Transverse colon (tissue), 4 donors: ENCODE measurements at regions of chr9 and their contacts with region 1.

Region 1: GRCh38 chr9:91164724-91165520 is 196.8 kb downstream of the AUH start:
- DNase-seq: peak; percentile 87
- H3K4me3 ChIP-seq: no peak overlapping the region
- H3K27ac ChIP-seq: peak overlapping the region; percentile 61 to 71 (median 66)
- H3K4me1 ChIP-seq: peaks cover 7 to 55% (median 22%) of the 10 kb centered on the region in 4 donors
- H3K27me3 ChIP-seq: no peaks in the 10 kb centered on the region
- CTCF ChIP-seq: no peak
- EP300 ChIP-seq: no peak
- POLR2A ChIP-seq: no peak

Region 2: DNA sequence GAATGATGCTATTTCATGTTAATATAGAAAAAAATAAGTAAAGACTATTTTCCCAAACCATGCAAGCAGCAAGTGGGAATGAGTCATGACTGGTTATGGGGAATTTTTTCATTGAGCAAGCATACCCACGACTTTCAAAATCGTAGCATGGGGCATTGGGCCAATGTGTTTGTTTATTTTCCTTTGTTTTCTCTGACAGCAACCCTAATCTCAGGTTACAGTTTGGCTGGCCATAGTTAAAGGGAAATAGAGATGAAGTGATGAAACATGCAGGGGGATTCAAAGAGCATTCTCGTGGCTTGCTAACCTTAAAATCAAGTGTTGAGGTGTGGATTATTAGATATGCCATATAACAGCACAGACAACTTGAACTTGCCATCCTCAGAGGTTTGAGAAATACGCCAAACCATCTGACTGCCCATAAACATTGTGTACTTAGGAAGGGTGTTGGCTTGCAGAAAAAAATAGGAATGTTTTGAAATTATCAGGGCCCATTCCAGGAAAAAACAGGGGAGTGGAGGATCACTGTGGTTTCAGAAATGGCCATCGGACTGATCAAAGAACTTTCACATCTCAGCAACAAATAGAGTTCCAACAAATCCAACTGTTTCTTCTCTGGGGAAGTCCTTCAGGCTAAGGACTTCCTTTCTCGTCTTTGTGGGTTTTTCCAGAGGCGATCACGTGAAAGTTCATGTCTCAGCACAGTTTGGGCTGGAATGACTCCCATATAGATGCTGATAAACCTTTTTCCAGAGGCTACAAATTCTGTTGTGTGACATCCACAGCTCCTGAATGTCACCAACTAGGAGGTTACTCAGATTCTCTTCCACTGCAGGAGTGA is 104.2 kb before region 1 on chr9:
- in situ Hi-C with region 1: loop called in 1 of 4 experiments (anchors 25 kb)
- intact Hi-C with region 1: no loop called
- DNase-seq: peak; percentile 28
- H3K4me3 ChIP-seq: no peak overlapping the region
- H3K27ac ChIP-seq: peak overlapping the region; percentile 9 to 61 (median 40)
- H3K4me1 ChIP-seq: peaks cover 0 to 14% (median 11%) of the 10 kb centered on the region in 4 donors
- H3K27me3 ChIP-seq: no peaks in the 10 kb centered on the region
- CTCF ChIP-seq: no peak
- EP300 ChIP-seq: no peak
- POLR2A ChIP-seq: no peak

Region 3: DNA sequence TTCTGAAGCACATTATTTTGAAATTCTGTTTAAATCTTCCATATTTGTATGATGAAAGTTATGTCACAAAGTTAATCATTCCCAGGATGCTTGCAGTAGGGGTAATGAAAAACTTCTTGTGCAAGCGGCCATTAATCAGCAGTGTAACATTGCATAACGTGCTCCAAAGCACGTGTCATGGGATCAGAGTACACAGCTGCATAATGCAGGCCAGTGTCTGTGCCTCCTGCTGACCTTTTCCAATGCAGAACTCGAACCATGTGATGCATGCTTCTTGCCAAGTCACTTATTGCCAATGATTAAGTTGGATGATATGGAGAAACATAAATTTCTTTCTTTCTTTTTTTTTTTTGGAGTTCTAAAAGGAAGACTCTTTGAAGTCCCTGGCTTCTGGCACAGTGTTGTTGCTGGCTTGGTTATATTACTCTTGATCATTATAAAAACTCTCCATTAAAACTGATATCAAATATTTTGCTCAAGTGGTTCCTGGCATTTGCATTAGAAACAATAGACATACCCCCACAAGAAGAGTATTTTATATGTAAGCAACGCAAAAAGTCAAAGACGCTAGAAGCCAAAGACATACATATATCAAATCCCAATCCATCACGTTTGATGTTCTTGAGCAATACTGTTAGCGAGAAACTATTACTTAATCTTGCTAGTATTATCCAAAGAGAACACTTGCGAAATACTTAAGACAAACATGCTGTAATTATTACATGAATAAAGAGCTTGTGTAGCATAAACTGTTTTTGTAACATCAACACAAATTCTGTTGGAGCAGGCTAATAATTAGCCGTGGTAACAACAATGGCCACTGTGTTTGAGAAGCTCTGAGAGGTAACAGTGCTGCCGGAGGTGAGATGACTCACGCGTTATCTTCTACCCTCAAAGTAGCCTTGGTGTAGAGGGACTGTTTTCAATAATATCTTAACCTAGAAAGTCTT is 32.6 kb after region 1 on chr9:
- in situ Hi-C with region 1: no loop called
- intact Hi-C with region 1: no loop called
- DNase-seq: peak; percentile 85
- H3K4me3 ChIP-seq: no peak overlapping the region
- H3K27ac ChIP-seq: peak overlapping the region; percentile 74 to 99 (median 98)
- H3K4me1 ChIP-seq: peaks cover 32 to 77% (median 55%) of the 10 kb centered on the region in 4 donors
- H3K27me3 ChIP-seq: no peaks in the 10 kb centered on the region
- CTCF ChIP-seq: no peak
- EP300 ChIP-seq: peak; percentile 99
- POLR2A ChIP-seq: no peak

Region 4: DNA sequence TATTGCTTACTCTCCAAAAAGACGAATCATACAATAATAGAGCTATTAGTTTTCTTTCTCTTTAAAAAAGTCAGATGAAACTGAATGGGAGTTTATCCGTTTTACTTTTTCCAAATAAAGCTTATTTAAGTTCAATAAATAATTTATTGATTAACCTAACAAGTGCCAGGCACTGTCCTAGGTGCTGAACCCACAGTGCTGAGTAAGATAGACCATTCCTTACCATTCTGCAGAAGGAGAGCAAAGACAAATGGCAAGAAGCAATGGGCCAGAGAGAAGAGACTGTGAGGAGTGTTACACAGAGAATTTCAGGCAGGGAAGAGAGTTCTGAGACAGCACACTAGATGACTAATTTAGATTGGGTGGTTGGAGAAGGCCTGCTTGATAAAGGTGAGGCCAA is 69.6 kb after region 1 on chr9:
- in situ Hi-C with region 1: no loop called
- intact Hi-C with region 1: no loop called
- DNase-seq: no peak
- H3K4me3 ChIP-seq: no peak overlapping the region
- H3K27ac ChIP-seq: no peak overlapping the region
- H3K4me1 ChIP-seq: no peaks in the 10 kb centered on the region
- H3K27me3 ChIP-seq: no peaks in the 10 kb centered on the region
- CTCF ChIP-seq: no peak
- EP300 ChIP-seq: no peak
- POLR2A ChIP-seq: no peak